ENCODE measurements at regions of chr2 and their contacts with region 1.

Region 1: GRCh38 chr2:69436938-69437750 is at the start of gene NFU1:
- DNase-seq: peak; percentile 80 to 97
- H3K4me3 ChIP-seq: peak within 1 kb of the TSS; percentile 81 to 92
- H3K27ac ChIP-seq: peak within 1 kb of the TSS; percentile 94 to 95
- H3K4me1 ChIP-seq: peaks cover 5 to 14% of the 10 kb centered on the region in 2 donors
- H3K27me3 ChIP-seq: no peaks in the 10 kb centered on the region
- CTCF ChIP-seq: peak; percentile 61 to 84 (median 75)
- total RNA-seq, gene NFU1: 49.4 TPM

Region 2: GRCh38 chr2:68832233-68832869 is 604.8 kb before region 1 on chr2:
- intact Hi-C with region 1: loop called (anchors 1 kb)
- DNase-seq: peak; percentile 70 to 94
- H3K4me3 ChIP-seq: no peak overlapping the region
- H3K27ac ChIP-seq: peak overlapping the region; percentile 95 to 97
- H3K4me1 ChIP-seq: peaks cover 28 to 45% of the 10 kb centered on the region in 2 donors
- H3K27me3 ChIP-seq: no peaks in the 10 kb centered on the region
- CTCF ChIP-seq: no peak

Region 3: DNA sequence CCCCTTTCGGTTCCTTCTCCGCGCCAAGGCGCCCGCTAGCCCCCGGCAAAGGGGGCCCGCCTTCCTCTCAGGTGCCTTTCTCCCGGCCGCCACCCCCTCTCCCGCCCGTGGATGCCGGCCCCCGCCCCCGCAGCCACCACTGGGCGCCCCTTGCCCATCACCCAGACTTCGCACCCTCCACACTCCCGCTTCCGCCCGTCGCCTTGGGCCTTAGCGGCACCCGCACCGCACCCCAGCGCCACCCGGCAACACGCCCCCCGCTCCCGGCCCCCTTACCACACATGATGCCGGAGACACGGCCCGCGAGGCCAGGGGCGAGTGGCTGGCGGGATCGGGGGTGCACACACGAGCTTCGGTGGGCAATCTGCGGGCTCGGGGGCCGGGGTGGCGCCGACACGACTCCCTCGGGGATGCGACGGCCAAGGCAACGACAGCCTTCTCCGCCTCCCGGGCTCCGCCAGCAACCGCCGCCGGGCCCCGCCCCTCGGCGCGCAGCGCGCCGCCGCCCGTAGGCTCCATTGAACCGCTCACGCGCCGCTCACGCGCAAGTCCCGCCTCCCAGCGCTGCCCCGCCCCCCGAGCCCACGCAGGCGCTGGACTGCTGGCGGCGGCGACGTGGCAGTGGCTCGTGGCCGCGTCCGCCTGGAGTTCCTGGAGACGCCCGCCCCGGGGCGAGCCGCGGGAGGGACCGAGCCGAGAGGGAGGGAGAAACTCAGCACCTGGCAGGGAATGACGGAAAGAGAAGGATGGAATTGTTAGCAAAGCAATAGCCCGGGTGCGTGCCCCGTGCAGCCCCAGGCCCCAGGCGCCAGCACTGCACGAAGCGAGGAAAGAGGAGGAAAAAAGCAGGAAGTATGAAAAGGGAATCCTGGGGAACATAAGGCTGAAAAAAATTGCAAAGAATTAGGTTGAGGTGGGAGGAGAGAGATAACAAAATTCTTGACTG is 50.1 kb before region 1 on chr2 and contains the start of gene GFPT1:
- intact Hi-C with region 1: loop called (anchors 1 kb)
- DNase-seq: peak; percentile 79 to 97
- H3K4me3 ChIP-seq: peak within 1 kb of the TSS; percentile 82 to 87
- H3K27ac ChIP-seq: peak within 1 kb of the TSS; percentile 89 to 90
- H3K4me1 ChIP-seq: peaks cover 3 to 4% of the 10 kb centered on the region in 2 donors
- H3K27me3 ChIP-seq: no peaks in the 10 kb centered on the region
- CTCF ChIP-seq: no peak
- total RNA-seq, gene GFPT1: 25.7 TPM

Region 4: GRCh38 chr2:69397234-69397633 is 39.9 kb before region 1 on chr2:
- intact Hi-C with region 1: no loop called
- DNase-seq: no peak
- H3K4me3 ChIP-seq: no peak overlapping the region
- H3K27ac ChIP-seq: peak overlapping the region; percentile 23 to 52
- H3K4me1 ChIP-seq: no peaks in the 10 kb centered on the region
- H3K27me3 ChIP-seq: no peaks in the 10 kb centered on the region
- CTCF ChIP-seq: no peak

Region 5: DNA sequence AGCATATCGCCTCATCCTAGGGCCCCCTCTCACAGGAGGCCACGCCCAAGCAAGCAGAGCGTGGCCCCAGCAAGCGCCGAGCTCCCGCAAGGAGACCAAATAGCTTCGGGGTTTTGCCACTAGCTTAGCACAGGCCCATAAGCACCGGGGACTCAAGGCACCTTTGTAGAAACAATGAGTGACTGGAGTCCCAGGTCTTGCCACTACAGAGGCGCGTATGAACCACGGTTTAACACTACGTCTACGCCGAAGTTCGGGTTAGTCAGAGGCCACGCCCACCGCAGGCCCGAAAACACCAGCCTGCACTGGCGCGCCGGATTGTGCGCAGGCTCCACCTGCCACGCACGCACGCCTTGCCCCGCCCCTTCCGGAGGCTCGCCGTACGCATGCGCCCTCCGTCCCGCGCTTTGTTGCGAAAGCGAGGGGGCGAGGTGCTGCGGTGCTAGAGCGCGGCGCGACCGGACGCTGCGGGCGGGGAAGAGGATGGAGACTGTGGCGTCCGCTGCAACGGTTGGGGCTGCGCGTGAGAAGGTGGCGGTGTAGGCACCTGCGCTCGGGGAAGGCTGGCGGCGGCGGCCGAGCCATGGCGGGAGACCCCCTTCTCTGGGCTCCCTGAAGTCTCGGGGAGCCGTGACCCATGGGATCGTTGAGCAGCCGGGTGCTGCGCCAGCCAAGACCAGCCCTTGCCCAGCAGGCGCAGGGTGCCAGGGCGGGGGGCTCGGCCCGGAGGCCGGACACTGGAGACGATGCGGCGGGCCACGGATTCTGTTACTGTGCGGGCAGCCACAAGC is 392.3 kb after region 1 on chr2 and contains the start of gene GMCL1:
- intact Hi-C with region 1: loop called (anchors 10 kb)
- DNase-seq: peak; percentile 86 to 98
- H3K4me3 ChIP-seq: peak within 1 kb of the TSS; percentile 90 to 91
- H3K27ac ChIP-seq: peak within 1 kb of the TSS; percentile 91 to 94
- H3K4me1 ChIP-seq: peaks cover 0 to 23% of the 10 kb centered on the region in 2 donors
- H3K27me3 ChIP-seq: no peaks in the 10 kb centered on the region
- CTCF ChIP-seq: peak in 1 of 3 experiments; percentile 10
- total RNA-seq, gene GMCL1: 10.4 TPM

Measured in ascending aorta (tissue), 2 donors.